Activated B cell treated with CpG ODN at 0.5 μM for 24 hours (primary cell): ENCODE measurements at regions of chr6 and their contacts with region 1.

Region 1: DNA sequence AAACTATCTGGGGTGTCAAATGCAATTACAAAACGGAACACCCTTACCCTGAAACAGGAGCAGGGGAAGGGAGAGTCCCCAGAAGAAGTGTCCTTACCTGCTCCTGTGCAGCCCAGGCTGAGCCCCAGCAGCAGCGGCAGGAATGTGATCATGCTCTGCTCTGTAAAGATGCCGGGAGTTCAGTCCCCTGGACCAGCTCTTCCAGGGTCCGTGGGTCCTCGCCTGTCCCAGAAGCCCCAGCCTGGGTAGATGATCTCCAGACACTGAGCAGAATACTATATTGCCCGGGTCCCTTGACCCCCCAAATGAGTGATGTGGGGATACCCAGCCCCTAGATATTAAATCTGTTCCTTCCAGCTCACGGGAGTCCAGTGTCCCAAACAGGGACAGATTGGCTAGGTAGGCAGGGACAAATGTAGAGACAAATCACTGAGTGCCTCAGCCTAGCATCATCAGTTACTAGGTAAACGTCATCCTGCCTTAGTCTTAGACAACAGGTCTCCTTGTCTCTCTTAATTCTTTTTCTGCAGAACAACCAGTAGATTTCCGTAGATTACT is at the start of gene HLA-DMB:
- DNase-seq: peak; percentile 53
- ATAC-seq: peak; percentile 60
- H3K4me3 Mint-ChIP-seq: peak within 1 kb of the TSS; percentile 98
- H3K27ac Mint-ChIP-seq: peak within 1 kb of the TSS; percentile 99
- H3K4me1 Mint-ChIP-seq: peaks cover 85% of the 10 kb centered on the region
- H3K27me3 Mint-ChIP-seq: no peaks in the 10 kb centered on the region
- CTCF ChIP-seq: no peak
- total RNA-seq, gene HLA-DMB: 341 and 365 TPM in 2 replicates

Region 2: GRCh38 chr6:32190054-32190851 is 750.5 kb before region 1 on chr6 and contains the start of gene PBX2:
- CTCF ChIA-PET with region 1: no interaction called
- POLR2A ChIA-PET with region 1: interaction called, 3 read pairs
- intact Hi-C with region 1: loop called (anchors 5 kb)
- DNase-seq: peak; percentile 61
- ATAC-seq: peak; percentile 86
- H3K4me3 Mint-ChIP-seq: peak within 1 kb of the TSS; percentile 91
- H3K27ac Mint-ChIP-seq: peak within 1 kb of the TSS; percentile 96
- H3K4me1 Mint-ChIP-seq: peaks cover 85% of the 10 kb centered on the region
- H3K27me3 Mint-ChIP-seq: no peaks in the 10 kb centered on the region
- CTCF ChIP-seq: no peak
- total RNA-seq, gene PBX2: 134 and 153 TPM in 2 replicates

Region 3: GRCh38 chr6:32843979-32844838 is 96.5 kb before region 1 on chr6 and contains the start of gene PSMB8:
- CTCF ChIA-PET with region 1: interaction called, 6 read pairs
- POLR2A ChIA-PET with region 1: interaction called, 23 read pairs
- intact Hi-C with region 1: loop called (anchors 1 kb)
- DNase-seq: peak; percentile 96
- ATAC-seq: peak; percentile 78
- H3K4me3 Mint-ChIP-seq: peak within 1 kb of the TSS; percentile 99
- H3K27ac Mint-ChIP-seq: peak within 1 kb of the TSS; percentile 100
- H3K4me1 Mint-ChIP-seq: peaks cover 92% of the 10 kb centered on the region
- H3K27me3 Mint-ChIP-seq: no peaks in the 10 kb centered on the region
- CTCF ChIP-seq: no peak
- total RNA-seq, gene PSMB8: 182 and 194 TPM in 2 replicates

Region 4: GRCh38 chr6:32853541-32854375 is 87.0 kb before region 1 on chr6 and contains the starts of genes PSMB9 and TAP1:
- CTCF ChIA-PET with region 1: no interaction called
- POLR2A ChIA-PET with region 1: interaction called, 45 read pairs
- intact Hi-C with region 1: no loop called
- DNase-seq: peak; percentile 91
- ATAC-seq: peak; percentile 80
- H3K4me3 Mint-ChIP-seq: peak within 1 kb of the TSS; percentile 99
- H3K27ac Mint-ChIP-seq: peak within 1 kb of the TSS; percentile 98
- H3K4me1 Mint-ChIP-seq: peaks cover 77% of the 10 kb centered on the region
- H3K27me3 Mint-ChIP-seq: no peaks in the 10 kb centered on the region
- CTCF ChIP-seq: peak; percentile 20
- total RNA-seq, gene PSMB9: 198 and 223 TPM in 2 replicates
- total RNA-seq, gene TAP1: 148 and 151 TPM in 2 replicates

Region 5: DNA sequence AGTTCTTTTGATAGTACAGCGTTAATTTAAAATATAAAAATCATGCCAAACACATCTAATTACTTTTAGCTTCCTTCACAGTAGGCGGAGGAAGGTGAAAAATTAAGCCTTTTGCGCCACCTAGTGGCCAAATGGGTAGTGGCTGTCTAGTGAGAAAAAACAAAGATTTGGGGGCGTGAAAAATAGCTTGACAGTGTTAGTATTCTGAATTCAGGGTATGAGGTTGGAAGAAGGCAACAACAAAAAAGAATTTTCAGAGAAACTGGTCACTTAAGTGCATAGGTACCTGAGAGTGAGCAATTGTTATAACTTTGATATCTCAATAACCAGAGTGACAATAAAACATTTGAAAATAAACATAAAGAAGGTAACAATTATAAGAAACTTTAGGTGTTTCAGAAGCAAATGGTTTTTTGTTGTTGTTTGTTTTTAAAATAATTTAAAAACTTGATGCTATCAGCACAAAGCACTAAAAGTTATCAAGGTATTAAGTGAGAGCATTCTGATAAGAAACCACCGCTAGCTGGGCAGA is 72.4 kb before region 1 on chr6:
- CTCF ChIA-PET with region 1: no interaction called
- POLR2A ChIA-PET with region 1: no interaction called
- intact Hi-C with region 1: no loop called
- DNase-seq: peak; percentile 70
- ATAC-seq: peak; percentile 66
- H3K4me3 Mint-ChIP-seq: no peak overlapping the region
- H3K27ac Mint-ChIP-seq: no peak overlapping the region
- H3K4me1 Mint-ChIP-seq: peaks cover 35% of the 10 kb centered on the region
- H3K27me3 Mint-ChIP-seq: no peaks in the 10 kb centered on the region
- CTCF ChIP-seq: peak; percentile 42

Region 6: DNA sequence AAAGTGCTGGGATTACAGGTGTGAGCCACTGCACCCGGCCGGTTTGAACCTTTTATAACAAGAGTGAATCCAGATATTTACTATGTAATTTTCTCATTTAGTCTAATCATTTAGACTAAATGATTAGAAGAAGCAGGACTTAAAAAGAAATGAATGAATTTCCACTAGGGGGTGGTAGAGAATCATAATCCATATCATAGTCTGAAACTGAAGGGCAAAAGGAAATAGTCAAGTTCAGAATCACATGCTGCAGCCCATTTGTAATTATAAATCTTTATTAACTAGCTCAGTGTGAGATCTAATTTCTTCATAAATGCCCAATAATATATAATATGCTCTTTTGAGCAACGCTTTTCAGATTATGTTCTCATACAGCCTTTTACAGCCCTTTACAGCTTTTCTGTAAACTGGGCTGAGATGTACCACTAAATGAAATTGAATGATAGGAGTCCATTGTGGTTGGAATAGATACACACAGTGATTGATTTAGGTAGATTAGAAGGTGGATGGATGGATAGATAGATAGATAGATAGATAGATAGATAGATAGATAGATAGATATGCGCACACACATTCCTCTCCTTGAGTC is 54.9 kb before region 1 on chr6:
- CTCF ChIA-PET with region 1: interaction called, 12 read pairs
- POLR2A ChIA-PET with region 1: interaction called, 13 read pairs
- intact Hi-C with region 1: no loop called
- DNase-seq: no peak
- ATAC-seq: peak; percentile 68
- H3K4me3 Mint-ChIP-seq: no peak overlapping the region
- H3K27ac Mint-ChIP-seq: no peak overlapping the region
- H3K4me1 Mint-ChIP-seq: peaks cover 27% of the 10 kb centered on the region
- H3K27me3 Mint-ChIP-seq: no peaks in the 10 kb centered on the region
- CTCF ChIP-seq: no peak

Region 7: DNA sequence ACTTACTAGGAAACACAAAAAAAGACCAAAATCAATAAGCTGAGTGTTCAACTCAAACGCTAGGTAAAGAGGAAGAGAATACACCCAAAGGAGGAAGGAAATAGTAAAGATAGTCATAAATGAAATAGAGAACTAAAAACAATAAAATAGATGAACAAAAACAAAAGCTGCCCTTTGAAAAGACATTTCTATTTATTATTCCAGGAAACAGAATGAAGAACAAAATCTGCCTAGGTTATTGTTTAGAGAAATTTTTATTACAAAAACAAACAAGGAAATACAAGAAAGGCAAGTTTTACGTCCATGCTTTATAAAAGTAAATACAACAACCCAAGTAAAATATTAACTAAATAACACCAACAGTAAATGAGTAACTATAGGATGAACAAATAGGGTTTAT is 20.0 kb before region 1 on chr6:
- CTCF ChIA-PET with region 1: interaction called, 4 read pairs
- POLR2A ChIA-PET with region 1: interaction called, 37 read pairs
- intact Hi-C with region 1: no loop called
- DNase-seq: no peak
- ATAC-seq: peak; percentile 40
- H3K4me3 Mint-ChIP-seq: peak overlapping the region; percentile 67
- H3K27ac Mint-ChIP-seq: peak overlapping the region; percentile 81
- H3K4me1 Mint-ChIP-seq: peaks cover 73% of the 10 kb centered on the region
- H3K27me3 Mint-ChIP-seq: no peaks in the 10 kb centered on the region
- CTCF ChIP-seq: no peak

Region 8: GRCh38 chr6:32952817-32953739 is 12.3 kb after region 1 on chr6 and contains the start of gene HLA-DMA:
- CTCF ChIA-PET with region 1: interaction called, 86 read pairs
- POLR2A ChIA-PET with region 1: interaction called, 594 read pairs
- intact Hi-C with region 1: loop called (anchors 1 kb)
- DNase-seq: peak; percentile 65
- ATAC-seq: peak; percentile 91
- H3K4me3 Mint-ChIP-seq: peak within 1 kb of the TSS; percentile 98
- H3K27ac Mint-ChIP-seq: peak within 1 kb of the TSS; percentile 97
- H3K4me1 Mint-ChIP-seq: peaks cover 85% of the 10 kb centered on the region
- H3K27me3 Mint-ChIP-seq: no peaks in the 10 kb centered on the region
- CTCF ChIP-seq: no peak
- total RNA-seq, gene HLA-DMA: 371 and 387 TPM in 2 replicates

Region 9: DNA sequence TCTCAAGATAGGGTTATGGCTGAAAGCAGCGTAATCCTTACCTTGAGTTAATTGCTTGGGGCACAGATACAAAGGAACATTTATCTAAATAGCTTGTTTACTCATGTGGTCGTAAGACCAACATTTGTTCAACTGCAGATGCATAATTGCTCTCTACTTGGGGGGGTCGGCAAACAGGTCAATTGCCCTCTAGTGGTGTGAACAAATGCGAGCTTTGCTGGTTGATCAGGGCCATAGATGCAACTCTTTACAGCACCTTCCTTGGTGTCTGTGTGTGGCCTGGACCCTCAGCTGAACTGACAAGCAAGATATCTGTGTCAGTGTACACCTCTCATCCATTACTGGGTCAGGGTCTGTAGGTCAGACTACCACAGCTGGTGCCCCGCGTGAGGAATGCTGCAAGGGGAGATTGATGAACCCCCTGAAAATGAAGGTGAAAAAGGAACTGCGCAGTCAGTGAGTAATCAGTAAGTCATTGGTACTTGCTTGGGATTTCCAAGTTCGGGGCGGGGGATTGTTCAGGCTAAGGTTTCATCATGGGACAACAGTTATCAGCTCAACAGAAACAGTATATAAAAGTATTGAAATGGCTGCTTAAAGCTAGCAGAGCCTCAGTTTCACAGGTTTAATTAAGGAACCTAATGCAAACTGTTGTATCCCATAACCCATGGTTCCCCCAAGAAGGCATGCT is 108.7 kb after region 1 on chr6:
- CTCF ChIA-PET with region 1: no interaction called
- POLR2A ChIA-PET with region 1: no interaction called
- intact Hi-C with region 1: no loop called
- DNase-seq: no peak
- ATAC-seq: no peak
- H3K4me3 Mint-ChIP-seq: no peak overlapping the region
- H3K27ac Mint-ChIP-seq: no peak overlapping the region
- H3K4me1 Mint-ChIP-seq: peaks cover 20% of the 10 kb centered on the region
- H3K27me3 Mint-ChIP-seq: no peaks in the 10 kb centered on the region
- CTCF ChIP-seq: no peak